Sigmoid colon (tissue), 7 donors: ENCODE measurements at regions of chr4 and their contacts with region 1.

Region 1: GRCh38 chr4:107037199-107037584 is 1.1 kb upstream of the DKK2 start:
- DNase-seq: peak; percentile 73
- H3K4me3 ChIP-seq: peak overlapping the region in 3 of 4 donors; percentile 43 to 50 (median 49)
- H3K27ac ChIP-seq: no peak overlapping the region
- H3K4me1 ChIP-seq: peaks cover 0 to 41% (median 38%) of the 10 kb centered on the region in 4 donors
- H3K27me3 ChIP-seq: peaks cover 0 to 61% (median 4%) of the 10 kb centered on the region in 3 donors
- CTCF ChIP-seq: peak in 2 of 4 experiments; percentile 18 to 57
- EP300 ChIP-seq: no peak
- POLR2A ChIP-seq: no peak

Region 2: GRCh38 chr4:106369456-106370060 is 667.6 kb before region 1 on chr4:
- intact Hi-C with region 1: loop called (anchors 10 kb)
- DNase-seq: no peak
- H3K4me3 ChIP-seq: no peak overlapping the region
- H3K27ac ChIP-seq: no peak overlapping the region
- H3K4me1 ChIP-seq: peaks cover 0 to 17% (median 15%) of the 10 kb centered on the region in 4 donors
- H3K27me3 ChIP-seq: no peaks in the 10 kb centered on the region
- CTCF ChIP-seq: peak; percentile 49 to 68 (median 63)
- EP300 ChIP-seq: no peak
- POLR2A ChIP-seq: no peak

Region 3: DNA sequence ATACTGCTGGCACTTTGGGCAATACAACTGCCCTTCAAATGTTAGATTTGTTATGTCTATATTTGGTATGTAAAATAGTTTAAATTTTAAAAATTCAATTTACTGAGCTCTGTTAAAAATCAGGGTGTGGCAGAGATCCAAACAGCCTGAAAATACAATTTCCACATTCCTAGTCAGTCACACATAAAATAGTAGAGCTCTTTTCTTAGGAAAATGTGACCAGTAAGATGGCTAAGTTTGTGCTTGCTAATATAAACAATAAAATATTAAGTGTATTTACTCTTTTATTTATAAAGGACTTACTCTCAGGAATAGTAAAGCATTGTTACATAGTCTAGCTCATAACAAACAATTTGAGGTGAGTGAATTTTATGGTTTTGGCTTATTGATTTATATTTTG is 201.3 kb before region 1 on chr4:
- intact Hi-C with region 1: no loop called
- DNase-seq: no peak
- H3K4me3 ChIP-seq: no peak overlapping the region
- H3K27ac ChIP-seq: no peak overlapping the region
- H3K4me1 ChIP-seq: no peaks in the 10 kb centered on the region
- H3K27me3 ChIP-seq: no peaks in the 10 kb centered on the region
- CTCF ChIP-seq: no peak
- EP300 ChIP-seq: no peak
- POLR2A ChIP-seq: no peak

Region 4: DNA sequence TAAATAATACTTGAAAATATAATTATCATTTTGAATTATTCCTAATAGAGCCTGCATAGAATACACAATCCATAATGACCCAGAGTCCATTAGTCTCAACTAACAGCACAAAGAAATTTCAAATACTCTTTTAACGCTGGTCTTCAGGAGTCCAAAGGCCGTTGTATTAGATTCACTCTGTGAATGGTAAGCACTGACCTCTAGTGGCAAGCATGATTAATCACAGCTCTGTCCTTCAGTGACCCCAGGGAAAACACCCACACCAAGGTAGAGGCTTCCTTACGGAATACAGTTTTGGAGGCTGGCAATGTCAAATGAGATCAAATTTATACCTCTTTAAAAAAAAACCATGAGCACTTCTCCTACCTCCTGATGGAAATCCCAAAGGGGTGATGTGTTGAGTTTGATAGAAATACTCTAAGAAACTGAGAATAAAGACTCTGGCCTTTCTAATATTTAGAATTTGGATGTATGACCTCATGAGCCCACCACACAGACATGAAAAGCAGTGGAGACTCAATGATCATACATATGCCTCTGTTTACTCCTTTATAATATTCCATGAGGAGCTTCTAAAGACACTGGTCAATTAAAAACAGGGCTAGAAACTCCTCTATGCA is 146.1 kb after region 1 on chr4:
- intact Hi-C with region 1: loop called (anchors 5 kb)
- DNase-seq: no peak
- H3K4me3 ChIP-seq: no peak overlapping the region
- H3K27ac ChIP-seq: no peak overlapping the region
- H3K4me1 ChIP-seq: no peaks in the 10 kb centered on the region
- H3K27me3 ChIP-seq: no peaks in the 10 kb centered on the region
- CTCF ChIP-seq: peak; percentile 53 to 81 (median 70)
- EP300 ChIP-seq: no peak
- POLR2A ChIP-seq: no peak

Region 5: DNA sequence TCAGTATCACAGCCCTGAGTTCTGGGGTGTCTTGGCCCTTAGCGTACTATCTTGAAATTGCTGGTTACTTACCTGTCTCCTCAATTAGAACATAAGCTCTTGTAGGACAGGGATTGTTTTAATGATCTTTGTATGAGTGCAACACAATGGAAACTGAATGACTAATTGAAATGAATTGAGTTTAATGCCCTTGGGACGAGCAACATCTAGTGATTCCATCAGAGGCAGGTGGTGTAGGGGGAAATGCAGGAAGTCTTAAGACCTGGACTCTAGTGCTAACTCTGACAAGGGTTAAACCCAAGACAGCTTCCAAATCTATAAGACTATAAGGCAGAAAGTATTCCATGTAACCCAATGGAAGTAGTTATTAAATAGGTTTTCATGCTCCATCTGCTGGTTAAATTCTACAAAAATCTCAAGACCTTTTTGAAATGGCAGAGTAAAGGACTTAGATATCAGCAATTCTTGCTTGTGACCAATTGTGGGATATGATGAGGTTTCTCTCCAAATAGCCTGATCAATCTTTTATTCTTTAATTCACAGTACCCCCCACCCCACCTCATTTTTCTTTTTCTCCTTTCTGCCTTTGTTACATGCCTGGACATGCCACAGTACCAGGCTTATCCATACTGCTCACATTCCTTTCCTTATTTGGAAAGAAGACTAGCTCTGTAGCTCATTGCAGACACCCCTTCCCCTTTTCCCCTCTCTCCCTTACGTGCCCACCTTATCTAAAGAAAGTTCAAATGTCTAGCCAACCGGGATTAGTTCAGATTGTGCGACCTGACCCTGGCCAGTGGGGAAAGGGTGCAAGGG is 342.1 kb after region 1 on chr4:
- intact Hi-C with region 1: loop called (anchors 2 kb)
- DNase-seq: no peak
- H3K4me3 ChIP-seq: no peak overlapping the region
- H3K27ac ChIP-seq: no peak overlapping the region
- H3K4me1 ChIP-seq: peaks cover 0 to 9% (median 2%) of the 10 kb centered on the region in 4 donors
- H3K27me3 ChIP-seq: no peaks in the 10 kb centered on the region
- CTCF ChIP-seq: peak in 1 of 4 experiments; percentile 12
- EP300 ChIP-seq: no peak
- POLR2A ChIP-seq: no peak

Region 6: DNA sequence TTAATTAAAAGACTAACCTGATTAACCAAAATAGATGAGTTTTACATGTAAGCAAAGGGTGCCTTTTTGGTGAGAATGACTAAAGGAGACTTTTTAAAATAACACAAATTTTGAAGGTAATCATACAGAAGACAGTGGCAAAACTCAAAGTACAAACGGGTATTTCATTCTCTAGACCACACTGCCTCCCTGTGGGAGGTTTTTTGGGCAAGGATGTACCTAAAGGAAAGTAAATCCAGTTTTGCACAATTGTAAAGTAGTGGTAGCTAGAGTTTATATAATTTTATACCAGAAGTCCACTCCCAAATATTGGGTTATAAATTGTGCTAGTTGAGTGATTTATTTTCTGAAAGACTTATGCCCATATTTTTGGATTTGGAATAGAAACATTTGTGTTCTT is 481.9 kb after region 1 on chr4:
- intact Hi-C with region 1: loop called (anchors 2 kb)
- DNase-seq: no peak
- H3K4me3 ChIP-seq: no peak overlapping the region
- H3K27ac ChIP-seq: no peak overlapping the region
- H3K4me1 ChIP-seq: no peaks in the 10 kb centered on the region
- H3K27me3 ChIP-seq: no peaks in the 10 kb centered on the region
- CTCF ChIP-seq: peak in 3 of 4 experiments; percentile 19 to 48 (median 22)
- EP300 ChIP-seq: no peak
- POLR2A ChIP-seq: no peak